GM10248 (cell line): ENCODE measurements at regions of chr11 and their contacts with region 1.

Region 1: GRCh38 chr11:121591405-121592033 is 138.8 kb upstream of the SORL1-AS1 start:
- DNase-seq: peak; percentile 73
- CTCF ChIP-seq: peak; percentile 82

Region 2: GRCh38 chr11:121249039-121249663 is 342.4 kb before region 1 on chr11:
- CTCF ChIA-PET with region 1: interaction called, 21 read pairs
- POLR2A ChIA-PET with region 1: no interaction called
- DNase-seq: peak; percentile 66
- CTCF ChIP-seq: peak; percentile 55

Region 3: DNA sequence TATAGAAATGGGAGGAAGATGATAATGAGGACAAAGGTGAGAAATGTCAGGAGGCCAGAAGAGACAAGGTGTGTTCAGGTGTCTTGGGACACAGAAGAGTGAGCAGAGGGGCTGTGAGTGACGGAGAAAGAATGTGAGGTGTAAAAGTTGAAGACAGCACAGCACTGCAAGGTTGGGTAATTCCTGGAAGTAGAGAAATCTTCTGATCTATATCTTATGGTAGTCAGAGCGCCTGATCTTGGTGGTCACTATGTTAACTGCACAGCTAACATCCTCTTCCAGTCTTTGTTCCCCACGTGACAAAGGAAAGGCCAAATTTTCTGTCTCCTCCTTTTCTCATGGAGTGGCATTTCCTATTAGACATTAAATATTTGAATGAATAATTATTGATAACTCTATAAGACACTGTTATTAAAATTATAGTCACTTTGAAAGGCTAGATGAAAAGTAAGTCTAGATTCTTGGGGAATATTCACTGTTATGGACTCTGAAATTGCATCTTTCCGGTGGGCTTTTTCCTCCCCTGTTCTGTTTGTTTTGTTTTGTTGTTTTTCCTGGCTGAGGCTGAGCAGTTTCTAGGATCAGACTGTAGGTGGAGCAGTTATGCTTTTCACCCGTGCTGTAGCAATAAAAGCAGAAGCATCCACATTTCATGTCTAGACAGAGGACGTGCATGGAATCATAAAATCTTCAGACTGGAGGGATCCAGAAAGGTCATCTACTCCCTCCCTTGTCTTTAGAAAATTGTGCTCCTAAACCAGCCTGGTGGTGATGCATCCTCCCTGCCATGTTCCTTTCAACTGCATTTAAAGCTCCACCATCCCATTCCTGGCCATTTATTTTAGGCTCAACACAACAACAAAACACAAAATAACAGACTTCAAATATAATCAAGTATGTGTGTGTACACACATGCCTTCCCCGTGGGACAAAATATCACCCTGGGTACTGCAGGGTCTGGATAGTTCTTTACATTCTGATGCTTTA is 272.4 kb before region 1 on chr11:
- CTCF ChIA-PET with region 1: interaction called, 46 read pairs
- POLR2A ChIA-PET with region 1: no interaction called
- DNase-seq: no peak
- CTCF ChIP-seq: peak; percentile 84

Region 4: GRCh38 chr11:121451986-121452608 is 139.4 kb before region 1 on chr11 and contains the start of gene SORL1:
- CTCF ChIA-PET with region 1: interaction called, 22 read pairs
- POLR2A ChIA-PET with region 1: no interaction called
- DNase-seq: peak; percentile 80
- CTCF ChIP-seq: peak; percentile 93

Region 5: GRCh38 chr11:121464352-121464946 is 127.1 kb before region 1 on chr11:
- CTCF ChIA-PET with region 1: interaction called, 11 read pairs
- POLR2A ChIA-PET with region 1: no interaction called
- DNase-seq: no peak
- CTCF ChIP-seq: no peak

Region 6: GRCh38 chr11:121615501-121615900 is 24.0 kb after region 1 on chr11:
- CTCF ChIA-PET with region 1: interaction called, 12 read pairs
- POLR2A ChIA-PET with region 1: no interaction called
- DNase-seq: no peak
- CTCF ChIP-seq: no peak